ENCODE measurements at regions of chr5 and their contacts with region 1.

Region 1: DNA sequence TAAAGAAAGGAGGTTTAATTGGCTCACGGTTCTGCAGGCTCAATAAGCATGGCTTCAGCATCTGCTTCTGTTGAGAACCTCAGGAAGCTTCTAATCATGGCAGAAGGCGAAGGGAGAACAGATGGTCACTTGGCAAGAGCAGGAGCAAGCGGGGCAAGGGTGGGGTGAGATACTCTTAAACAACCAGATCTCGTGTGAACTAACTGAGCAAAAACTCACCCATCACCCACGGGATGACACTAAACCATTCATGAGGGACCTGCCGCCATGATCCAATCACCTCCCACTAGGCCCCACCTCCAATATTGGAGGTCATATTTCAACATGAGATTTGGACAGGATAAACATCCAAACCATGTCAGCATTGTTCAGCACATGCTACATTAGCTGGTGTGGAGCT is 89.1 kb upstream of the HAND1 start:
- DNase-seq: no peak
- ATAC-seq: no peak
- H3K4me3 ChIP-seq: no peak overlapping the region
- H3K27ac ChIP-seq: no peak overlapping the region
- H3K4me1 ChIP-seq: no peaks in the 10 kb centered on the region
- H3K27me3 ChIP-seq: peaks cover 13 to 38% of the 10 kb centered on the region in 2 experiments
- CTCF ChIP-seq: no peak
- EP300 ChIP-seq: no peak
- POLR2A ChIP-seq: no peak
- RAD21 ChIP-seq: no peak

Region 2: GRCh38 chr5:154583545-154584496 is 16.7 kb after region 1 on chr5:
- CTCF ChIA-PET with region 1: no interaction called
- POLR2A ChIA-PET with region 1: interaction called, 12 read pairs
- in situ Hi-C with region 1: no loop called
- intact Hi-C with region 1: no loop called
- DNase-seq: no peak
- ATAC-seq: peak; percentile 54; the same call in 2 of the 3 replicates
- H3K4me3 ChIP-seq: no peak overlapping the region
- H3K27ac ChIP-seq: no peak overlapping the region
- H3K4me1 ChIP-seq: no peaks in the 10 kb centered on the region
- H3K27me3 ChIP-seq: peaks cover 23 to 31% of the 10 kb centered on the region in 2 experiments
- CTCF ChIP-seq: no peak
- EP300 ChIP-seq: no peak
- POLR2A ChIP-seq: no peak
- RAD21 ChIP-seq: no peak